Activated CD8-positive, alpha-beta T cell treated with anti-CD3 and anti-CD28 coated beads for 36 hours (primary cell): ENCODE measurements at regions of chr15 and their contacts with region 1.

Region 1: DNA sequence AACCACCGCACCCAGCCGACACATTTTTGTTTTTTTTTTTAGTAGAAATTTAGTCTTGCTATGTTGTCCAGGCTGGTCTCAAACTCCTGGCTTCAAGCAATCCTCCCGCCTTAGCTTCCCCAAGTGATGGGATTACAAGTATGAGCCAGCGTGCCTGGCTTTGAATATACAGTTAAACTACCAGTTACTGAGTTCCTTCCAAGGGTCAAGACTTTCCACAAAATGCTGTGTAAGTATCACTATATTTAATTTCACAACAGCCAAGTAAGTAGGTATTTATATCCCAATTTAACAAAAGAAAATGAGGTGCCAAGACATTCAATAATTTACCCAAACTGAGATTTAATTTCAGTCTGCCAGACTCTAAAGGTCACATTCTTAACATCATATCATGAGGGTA is 181.3 kb upstream of the TMC3 start:
- DNase-seq: no peak
- ATAC-seq: no peak
- H3K4me3 Mint-ChIP-seq: no peak overlapping the region
- H3K27ac Mint-ChIP-seq: no peak overlapping the region
- H3K4me1 Mint-ChIP-seq: no peaks in the 10 kb centered on the region
- H3K27me3 Mint-ChIP-seq: no peaks in the 10 kb centered on the region
- CTCF ChIP-seq: no peak

Region 2: GRCh38 chr15:81544385-81544784 is 11.0 kb before region 1 on chr15:
- CTCF ChIA-PET with region 1: no interaction called
- POLR2A ChIA-PET with region 1: no interaction called
- intact Hi-C with region 1: loop called (anchors 1 kb)
- DNase-seq: no peak
- ATAC-seq: no peak
- H3K4me3 Mint-ChIP-seq: no peak overlapping the region
- H3K27ac Mint-ChIP-seq: no peak overlapping the region
- H3K4me1 Mint-ChIP-seq: no peaks in the 10 kb centered on the region
- H3K27me3 Mint-ChIP-seq: peaks cover 9% of the 10 kb centered on the region
- CTCF ChIP-seq: no peak